Spleen (tissue), 13 donors: ENCODE measurements at regions of chr5 and their contacts with region 1.

Region 1: DNA sequence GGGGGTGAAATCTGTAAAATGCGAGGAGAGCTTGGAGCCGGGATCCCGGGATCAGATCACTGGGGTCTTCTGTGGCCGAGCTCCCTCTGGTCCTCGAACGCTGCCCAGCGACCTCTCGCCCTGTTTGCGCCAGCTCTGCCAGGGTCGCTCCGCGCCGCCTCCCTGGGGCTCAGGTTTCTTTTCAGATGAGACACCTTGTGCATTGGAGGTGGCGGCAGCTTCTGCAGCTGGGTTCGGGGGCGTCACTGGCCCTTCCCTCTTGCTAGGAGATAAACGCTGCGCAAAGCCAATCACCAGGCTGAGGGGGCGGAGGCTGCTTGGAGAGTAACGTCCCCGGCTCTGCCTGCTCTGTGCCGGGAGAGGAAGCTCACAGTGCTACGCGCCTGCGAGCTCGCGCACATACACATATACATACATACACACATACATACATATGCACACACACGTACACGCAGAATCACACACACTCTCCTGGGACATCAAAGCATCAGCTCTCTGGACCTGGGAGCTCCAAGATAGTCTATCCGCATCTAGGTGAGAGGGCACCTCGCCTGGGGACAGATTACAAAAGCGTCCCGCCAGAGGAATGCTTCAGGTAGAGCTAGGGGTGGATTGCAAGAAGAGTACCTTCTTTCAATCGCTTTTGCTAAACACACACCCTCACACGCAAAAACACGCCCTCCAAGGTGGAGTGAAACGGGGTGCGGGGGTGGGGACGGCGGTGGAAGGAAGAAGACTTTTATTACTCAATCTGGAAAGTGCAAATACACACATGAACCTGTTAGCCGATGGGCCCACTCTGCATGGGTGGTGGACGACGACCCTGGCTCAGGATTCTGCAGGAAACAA is at the start of gene ST8SIA4:
- DNase-seq: peak; percentile 99
- H3K4me3 ChIP-seq: peak within 1 kb of the TSS; percentile 69 to 88 (median 74)
- H3K27ac ChIP-seq: peak within 1 kb of the TSS; percentile 88 to 97 (median 94)
- H3K4me1 ChIP-seq: peaks cover 15 to 54% (median 37%) of the 10 kb centered on the region in 6 donors
- H3K27me3 ChIP-seq: no peaks in the 10 kb centered on the region
- CTCF ChIP-seq: peak in 2 of 11 experiments; percentile 11 to 14
- POLR2A ChIP-seq: peak; percentile 67 to 97 (median 77)
- total RNA-seq, gene ST8SIA4: 37.0 to 56.1 (median 48.2) TPM

Region 2: DNA sequence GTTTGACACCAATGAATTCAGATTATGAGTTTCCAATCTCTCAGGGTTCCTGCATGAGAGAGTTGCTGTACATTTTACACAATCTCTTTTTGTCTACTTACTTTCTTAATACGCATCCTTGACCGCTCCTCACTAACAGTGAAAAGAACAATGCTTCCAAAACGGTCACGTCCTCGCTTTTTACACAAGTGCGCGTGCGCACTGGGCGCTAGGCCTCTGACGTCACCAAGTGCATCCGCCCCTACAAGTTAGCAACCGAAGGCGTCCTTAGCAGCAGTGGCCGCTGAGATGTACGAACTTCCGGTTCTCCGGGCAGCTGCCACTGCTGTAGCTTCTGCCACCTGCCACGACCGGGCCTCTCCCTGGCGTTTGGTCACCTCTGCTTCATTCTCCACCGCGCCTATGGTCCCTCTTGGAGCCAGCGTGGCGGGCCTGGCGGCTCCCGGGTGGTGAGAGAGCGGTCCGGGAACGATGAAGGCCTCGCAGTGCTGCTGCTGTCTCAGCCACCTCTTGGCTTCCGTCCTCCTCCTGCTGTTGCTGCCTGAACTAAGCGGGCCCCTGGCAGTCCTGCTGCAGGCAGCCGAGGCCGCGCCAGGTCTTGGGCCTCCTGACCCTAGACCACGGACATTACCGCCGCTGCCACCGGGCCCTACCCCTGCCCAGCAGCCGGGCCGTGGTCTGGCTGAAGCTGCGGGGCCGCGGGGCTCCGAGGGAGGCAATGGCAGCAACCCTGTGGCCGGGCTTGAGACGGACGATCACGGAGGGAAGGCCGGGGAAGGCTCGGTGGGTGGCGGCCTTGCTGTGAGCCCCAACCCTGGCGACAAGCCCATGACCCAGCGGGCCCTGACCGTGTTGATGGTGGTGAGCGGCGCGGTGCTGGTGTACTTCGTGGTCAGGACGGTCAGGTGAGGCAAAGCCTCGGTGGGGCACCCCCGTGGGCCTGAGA is 367.9 kb before region 1 on chr5 and contains the start of gene FAM174A:
- intact Hi-C with region 1: loop called (anchors 5 kb)
- DNase-seq: peak; percentile 97
- H3K4me3 ChIP-seq: peak within 1 kb of the TSS; percentile 63 to 96 (median 90)
- H3K27ac ChIP-seq: peak within 1 kb of the TSS; percentile 85 to 94 (median 91)
- H3K4me1 ChIP-seq: peaks cover 14 to 51% (median 39%) of the 10 kb centered on the region in 6 donors
- H3K27me3 ChIP-seq: no peaks in the 10 kb centered on the region
- CTCF ChIP-seq: no peak
- POLR2A ChIP-seq: peak in 1 of 3 donors; percentile 34
- total RNA-seq, gene FAM174A: 9.5 to 26.7 (median 13.6) TPM

Region 3: GRCh38 chr5:100667161-100667630 is 236.1 kb before region 1 on chr5:
- intact Hi-C with region 1: no loop called
- DNase-seq: no peak
- H3K4me3 ChIP-seq: peak overlapping the region in 1 of 8 donors; percentile 44
- H3K27ac ChIP-seq: peak overlapping the region in 7 of 8 donors; percentile 39 to 87 (median 71)
- H3K4me1 ChIP-seq: peaks cover 0 to 19% (median 6%) of the 10 kb centered on the region in 6 donors
- H3K27me3 ChIP-seq: no peaks in the 10 kb centered on the region
- CTCF ChIP-seq: no peak
- POLR2A ChIP-seq: no peak

Region 4: GRCh38 chr5:100779669-100780375 is 123.4 kb before region 1 on chr5:
- intact Hi-C with region 1: loop called (anchors 10 kb)
- DNase-seq: no peak
- H3K4me3 ChIP-seq: peak overlapping the region in 4 of 8 donors; percentile 12 to 51 (median 18)
- H3K27ac ChIP-seq: peak overlapping the region; percentile 59 to 89 (median 84)
- H3K4me1 ChIP-seq: peaks cover 17 to 61% (median 42%) of the 10 kb centered on the region in 6 donors
- H3K27me3 ChIP-seq: no peaks in the 10 kb centered on the region
- CTCF ChIP-seq: no peak
- POLR2A ChIP-seq: no peak

Region 5: DNA sequence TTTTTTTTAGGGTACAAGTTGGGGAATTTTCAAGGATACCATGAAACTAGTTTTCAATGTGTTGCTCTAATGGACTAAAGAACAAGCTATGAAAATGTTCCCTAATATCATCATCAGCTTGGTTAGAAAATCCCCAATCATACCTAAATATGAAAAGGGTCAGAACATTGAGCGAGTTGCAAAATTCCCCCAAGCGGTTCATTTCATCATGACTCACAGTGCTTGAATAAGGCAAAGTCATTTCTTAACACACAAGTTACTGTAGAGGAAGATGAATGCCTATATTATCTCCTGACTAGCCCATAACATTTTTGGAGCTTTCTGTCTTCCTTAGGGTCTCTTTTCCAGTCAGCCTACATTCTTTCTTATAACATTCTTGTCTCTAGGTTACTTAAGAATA is 62.9 kb before region 1 on chr5:
- intact Hi-C with region 1: loop called (anchors 10 kb)
- DNase-seq: no peak
- H3K4me3 ChIP-seq: no peak overlapping the region
- H3K27ac ChIP-seq: peak overlapping the region in 7 of 8 donors; percentile 64 to 76 (median 68)
- H3K4me1 ChIP-seq: peaks cover 29 to 72% (median 59%) of the 10 kb centered on the region in 6 donors
- H3K27me3 ChIP-seq: no peaks in the 10 kb centered on the region
- CTCF ChIP-seq: peak in 2 of 11 experiments; percentile 10 to 15
- POLR2A ChIP-seq: no peak